Calu3 (cell line): ENCODE measurements at regions of chr10 and their contacts with region 1.

Region 1: DNA sequence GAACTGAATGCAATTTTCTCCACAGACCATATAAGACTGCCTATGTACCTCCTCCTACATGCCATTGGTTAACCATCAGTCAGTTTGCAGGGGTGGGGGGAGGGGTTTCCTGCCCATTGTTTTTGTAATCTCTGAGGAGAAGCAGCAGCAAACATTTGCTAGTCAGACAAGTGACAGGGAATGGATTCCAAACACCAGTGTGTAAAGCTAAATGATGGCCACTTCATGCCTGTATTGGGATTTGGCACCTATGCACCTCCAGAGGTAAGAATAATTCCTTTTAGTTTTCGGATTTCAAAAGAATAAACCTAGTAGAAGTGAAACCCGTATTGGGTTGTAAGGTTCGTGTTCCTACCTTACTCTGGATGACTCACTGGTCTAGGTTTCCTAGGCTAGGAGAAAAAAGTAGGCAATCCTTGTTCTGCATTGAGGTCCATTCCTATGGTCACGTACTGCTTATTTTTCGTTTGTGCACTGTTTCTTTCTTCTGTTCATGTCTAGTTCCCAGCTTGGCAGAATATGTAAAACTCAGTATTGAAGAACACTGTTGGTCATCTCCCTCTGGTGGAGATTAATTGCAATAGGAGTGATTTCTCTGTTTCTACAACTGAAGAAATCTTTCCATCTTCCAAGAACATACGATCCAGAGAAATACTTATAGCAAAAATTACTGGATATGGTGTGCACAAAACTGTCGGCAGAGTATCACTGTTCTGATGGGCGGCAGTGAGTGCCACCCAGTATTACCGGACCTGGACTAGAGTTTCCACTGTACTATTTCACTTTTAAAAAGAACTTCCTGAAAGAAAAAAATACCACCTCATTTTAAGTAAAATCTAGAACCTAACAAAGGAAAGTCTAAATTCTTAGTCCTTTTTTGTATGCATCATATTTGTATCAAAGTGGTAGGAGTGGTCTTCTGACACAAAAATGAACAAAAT is at the start of gene AKR1C3:
- DNase-seq: peak; percentile 22
- H3K4me3 Mint-ChIP-seq: peak within 1 kb of the TSS; percentile 78
- H3K27ac Mint-ChIP-seq: peak within 1 kb of the TSS; percentile 93
- H3K4me1 Mint-ChIP-seq: peaks cover 50% of the 10 kb centered on the region
- H3K27me3 Mint-ChIP-seq: no peaks in the 10 kb centered on the region
- CTCF ChIP-seq: peak; percentile 65
- total RNA-seq, gene AKR1C3: 177 and 181 TPM in 2 replicates

Region 2: DNA sequence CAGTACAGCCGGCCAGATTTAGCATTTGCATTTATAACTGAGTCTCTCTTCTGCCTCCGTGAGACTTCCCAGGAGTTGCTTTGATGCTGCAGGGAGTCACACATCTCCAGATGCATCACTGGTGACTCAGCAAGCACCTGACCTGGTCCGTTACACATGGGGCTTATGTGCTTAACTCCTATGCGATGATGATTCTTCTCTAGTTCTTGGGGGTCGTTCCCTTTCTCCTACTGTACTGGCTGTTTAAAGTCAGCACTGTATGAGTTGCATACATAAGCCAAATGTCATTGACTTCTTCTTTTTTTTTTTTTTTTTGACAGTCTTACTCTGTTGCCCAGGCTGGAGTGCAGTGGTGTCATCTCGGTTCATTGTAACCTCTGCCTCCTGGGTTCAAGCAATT is 281.5 kb before region 1 on chr10:
- CTCF ChIA-PET with region 1: no interaction called
- intact Hi-C with region 1: loop called (anchors 10 kb)
- DNase-seq: peak; percentile 21
- H3K4me3 Mint-ChIP-seq: no peak overlapping the region
- H3K27ac Mint-ChIP-seq: no peak overlapping the region
- H3K4me1 Mint-ChIP-seq: peaks cover 34% of the 10 kb centered on the region
- H3K27me3 Mint-ChIP-seq: no peaks in the 10 kb centered on the region
- CTCF ChIP-seq: no peak

Region 3: DNA sequence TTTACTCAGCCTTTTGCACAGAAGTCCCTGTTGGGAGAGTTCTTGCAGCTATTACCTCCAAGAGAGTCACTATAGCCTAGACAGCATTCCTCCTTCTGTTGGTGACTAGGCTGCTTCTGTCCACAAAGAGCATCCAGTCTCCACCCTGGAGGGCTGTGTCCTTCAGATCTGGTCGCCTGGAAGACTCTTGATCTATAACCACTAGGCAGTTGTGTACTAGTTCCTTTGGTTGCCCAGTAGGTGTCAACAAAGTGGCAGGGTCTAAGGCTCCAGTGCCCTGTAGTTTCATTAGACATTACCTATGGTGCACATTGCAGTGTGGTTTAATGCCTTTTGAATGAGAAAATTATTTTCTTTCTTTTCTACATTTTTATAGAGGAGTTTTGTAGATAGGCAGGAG is 79.6 kb before region 1 on chr10:
- CTCF ChIA-PET with region 1: no interaction called
- intact Hi-C with region 1: loop called (anchors 1 kb)
- DNase-seq: peak; percentile 35
- H3K4me3 Mint-ChIP-seq: no peak overlapping the region
- H3K27ac Mint-ChIP-seq: no peak overlapping the region
- H3K4me1 Mint-ChIP-seq: peaks cover 55% of the 10 kb centered on the region
- H3K27me3 Mint-ChIP-seq: no peaks in the 10 kb centered on the region
- CTCF ChIP-seq: no peak

Region 4: GRCh38 chr10:5071411-5072198 is 22.9 kb before region 1 on chr10:
- CTCF ChIA-PET with region 1: no interaction called
- intact Hi-C with region 1: loop called (anchors 1 kb)
- DNase-seq: peak; percentile 65
- H3K4me3 Mint-ChIP-seq: peak overlapping the region; percentile 55
- H3K27ac Mint-ChIP-seq: peak overlapping the region; percentile 96
- H3K4me1 Mint-ChIP-seq: peaks cover 49% of the 10 kb centered on the region
- H3K27me3 Mint-ChIP-seq: no peaks in the 10 kb centered on the region
- CTCF ChIP-seq: no peak

Region 5: DNA sequence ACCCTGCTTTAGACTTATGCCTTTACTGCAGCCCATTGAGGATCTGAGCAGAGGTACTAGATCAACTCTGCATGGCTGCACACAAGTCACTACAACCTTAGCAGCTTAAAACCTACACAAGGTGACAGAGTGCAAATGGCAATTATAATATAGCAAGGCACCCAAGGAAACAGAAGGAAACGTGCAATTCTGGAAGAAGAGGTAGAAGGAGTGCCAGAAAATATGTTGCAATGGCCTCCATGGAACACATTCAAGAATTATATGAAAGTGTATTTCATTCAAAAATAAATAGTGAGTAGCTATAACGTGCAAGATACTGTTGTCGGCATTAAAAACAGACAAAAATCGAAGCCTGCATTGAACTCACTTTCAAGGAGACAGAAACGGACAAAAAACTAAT is 93.3 kb after region 1 on chr10:
- CTCF ChIA-PET with region 1: no interaction called
- intact Hi-C with region 1: no loop called
- DNase-seq: no peak
- H3K4me3 Mint-ChIP-seq: no peak overlapping the region
- H3K27ac Mint-ChIP-seq: no peak overlapping the region
- H3K4me1 Mint-ChIP-seq: no peaks in the 10 kb centered on the region
- H3K27me3 Mint-ChIP-seq: no peaks in the 10 kb centered on the region
- CTCF ChIP-seq: no peak

Region 6: DNA sequence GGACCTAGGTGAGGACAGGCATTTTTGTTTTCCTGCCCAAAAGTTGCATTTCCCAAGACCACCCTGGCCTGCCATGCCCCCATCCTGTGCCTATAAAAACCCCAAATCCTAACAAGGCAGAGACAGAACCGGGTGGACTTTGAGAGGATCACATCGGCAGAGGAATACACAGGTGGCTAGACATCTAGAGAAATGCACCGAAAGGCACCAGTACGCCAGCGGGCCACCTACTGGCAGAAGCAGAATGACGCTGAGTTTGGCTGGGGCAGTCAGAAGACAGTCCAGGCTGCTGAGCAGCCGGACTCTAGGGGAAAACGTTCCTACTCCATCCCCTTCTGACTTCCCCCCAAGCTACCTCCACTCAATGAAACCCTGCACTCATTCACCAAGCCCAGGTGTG is 104.9 kb after region 1 on chr10:
- CTCF ChIA-PET with region 1: no interaction called
- intact Hi-C with region 1: loop called (anchors 5 kb)
- DNase-seq: no peak
- H3K4me3 Mint-ChIP-seq: no peak overlapping the region
- H3K27ac Mint-ChIP-seq: no peak overlapping the region
- H3K4me1 Mint-ChIP-seq: peaks cover 18% of the 10 kb centered on the region
- H3K27me3 Mint-ChIP-seq: no peaks in the 10 kb centered on the region
- CTCF ChIP-seq: no peak

Region 7: GRCh38 chr10:5260828-5261227 is 166.3 kb after region 1 on chr10:
- CTCF ChIA-PET with region 1: no interaction called
- intact Hi-C with region 1: no loop called
- DNase-seq: no peak
- H3K4me3 Mint-ChIP-seq: no peak overlapping the region
- H3K27ac Mint-ChIP-seq: no peak overlapping the region
- H3K4me1 Mint-ChIP-seq: peaks cover 18% of the 10 kb centered on the region
- H3K27me3 Mint-ChIP-seq: no peaks in the 10 kb centered on the region
- CTCF ChIP-seq: no peak

Region 8: GRCh38 chr10:5283305-5284158 is 189.0 kb after region 1 on chr10:
- CTCF ChIA-PET with region 1: interaction called, 3 read pairs
- intact Hi-C with region 1: loop called (anchors 1 kb)
- DNase-seq: peak; percentile 83
- H3K4me3 Mint-ChIP-seq: peak overlapping the region; percentile 56
- H3K27ac Mint-ChIP-seq: peak overlapping the region; percentile 64
- H3K4me1 Mint-ChIP-seq: peaks cover 33% of the 10 kb centered on the region
- H3K27me3 Mint-ChIP-seq: no peaks in the 10 kb centered on the region
- CTCF ChIP-seq: peak; percentile 76

Region 9: DNA sequence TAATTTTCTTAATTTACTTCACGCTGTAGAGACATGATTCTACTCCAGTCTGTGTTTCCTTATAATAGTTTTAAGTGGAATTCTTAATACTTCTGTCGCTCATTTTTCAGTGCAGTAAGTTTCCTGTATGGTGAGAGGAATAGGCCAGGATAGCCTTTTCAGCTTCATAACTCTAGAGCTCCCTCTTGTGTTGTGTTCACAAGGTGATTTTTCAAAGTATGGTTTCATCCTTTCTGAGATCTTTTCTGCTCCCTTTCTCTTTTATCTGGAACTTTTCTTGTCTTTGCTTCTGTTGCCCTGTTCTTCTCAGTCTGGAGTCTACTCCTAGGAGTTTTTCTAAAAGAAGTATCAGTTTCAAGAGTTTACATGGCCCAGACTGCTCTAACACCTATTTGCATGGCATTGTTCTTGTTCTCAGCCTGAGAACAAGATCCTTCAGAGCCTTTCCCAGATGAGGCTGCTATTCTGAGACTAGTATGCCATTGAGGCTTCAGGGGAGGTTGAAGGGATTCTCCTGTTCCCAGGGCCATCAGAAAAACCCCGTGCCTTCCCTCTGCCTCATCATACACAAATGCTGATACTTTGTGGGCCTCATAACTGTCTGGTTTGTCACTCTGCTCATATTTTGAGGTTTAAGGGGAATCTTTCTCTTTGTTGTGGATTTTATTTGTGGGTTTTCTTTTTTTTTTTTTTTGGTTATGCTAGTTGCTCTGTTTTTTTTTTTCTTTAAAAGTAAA is 339.6 kb after region 1 on chr10:
- CTCF ChIA-PET with region 1: interaction called, 3 read pairs
- intact Hi-C with region 1: loop called (anchors 10 kb)
- DNase-seq: peak; percentile 41
- H3K4me3 Mint-ChIP-seq: no peak overlapping the region
- H3K27ac Mint-ChIP-seq: peak overlapping the region; percentile 22
- H3K4me1 Mint-ChIP-seq: peaks cover 27% of the 10 kb centered on the region
- H3K27me3 Mint-ChIP-seq: no peaks in the 10 kb centered on the region
- CTCF ChIP-seq: no peak